ENCODE measurements at regions of chr12 and their contacts with region 1.

Region 1: DNA sequence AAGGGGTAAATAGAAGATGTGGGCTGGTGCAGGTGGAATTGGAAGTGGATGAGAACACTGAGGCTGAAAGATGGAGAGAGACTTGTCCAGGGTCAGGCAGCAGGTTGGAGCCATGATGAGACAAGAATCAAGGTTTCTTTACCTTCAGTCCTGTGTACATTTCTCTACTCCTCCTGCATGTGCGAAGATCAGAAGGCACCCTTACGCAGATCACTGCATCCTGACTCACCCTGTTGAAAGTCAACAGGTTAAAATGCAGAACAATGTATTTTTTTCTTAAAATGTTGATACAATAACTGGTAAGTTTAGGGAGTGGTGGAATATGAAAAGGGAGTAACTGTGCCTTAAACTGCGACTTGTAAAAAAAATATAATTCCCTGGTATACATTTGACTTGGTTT is 47.8 kb downstream of the TESPA1 start:
- DNase-seq: no peak
- H3K4me3 ChIP-seq: no peak overlapping the region
- H3K27ac ChIP-seq: no peak overlapping the region
- H3K4me1 ChIP-seq: no peaks in the 10 kb centered on the region
- H3K27me3 ChIP-seq: no peaks in the 10 kb centered on the region
- CTCF ChIP-seq: no peak
- POLR2A ChIP-seq: no peak

Region 2: GRCh38 chr12:54891717-54892554 is 44.8 kb before region 1 on chr12:
- intact Hi-C with region 1: loop called (anchors 2 kb)
- DNase-seq: no peak
- H3K4me3 ChIP-seq: no peak overlapping the region
- H3K27ac ChIP-seq: no peak overlapping the region
- H3K4me1 ChIP-seq: no peaks in the 10 kb centered on the region
- H3K27me3 ChIP-seq: no peaks in the 10 kb centered on the region
- CTCF ChIP-seq: no peak
- POLR2A ChIP-seq: no peak